Natural killer cell (primary cell): ENCODE measurements at regions of chr6 and their contacts with region 1.

Region 1: GRCh38 chr6:158793432-158793831 is 25.7 kb downstream of the EZR start:
- DNase-seq: peak in 1 of 2 donors; percentile 69
- ATAC-seq: peak in 2 of 3 donors; percentile 46 to 55
- H3K4me3 ChIP-seq: no peak overlapping the region
- H3K4me3 Mint-ChIP-seq: no peak overlapping the region
- H3K27ac ChIP-seq: no peak overlapping the region
- H3K27ac Mint-ChIP-seq: peak overlapping the region in 1 of 2 donors; percentile 29
- H3K4me1 ChIP-seq: peaks cover 52% of the 10 kb centered on the region
- H3K4me1 Mint-ChIP-seq: peaks cover 60 to 72% of the 10 kb centered on the region in 2 donors
- H3K27me3 ChIP-seq: no peaks in the 10 kb centered on the region
- H3K27me3 Mint-ChIP-seq: no peaks in the 10 kb centered on the region
- CTCF ChIP-seq: peak; percentile 50

Region 2: DNA sequence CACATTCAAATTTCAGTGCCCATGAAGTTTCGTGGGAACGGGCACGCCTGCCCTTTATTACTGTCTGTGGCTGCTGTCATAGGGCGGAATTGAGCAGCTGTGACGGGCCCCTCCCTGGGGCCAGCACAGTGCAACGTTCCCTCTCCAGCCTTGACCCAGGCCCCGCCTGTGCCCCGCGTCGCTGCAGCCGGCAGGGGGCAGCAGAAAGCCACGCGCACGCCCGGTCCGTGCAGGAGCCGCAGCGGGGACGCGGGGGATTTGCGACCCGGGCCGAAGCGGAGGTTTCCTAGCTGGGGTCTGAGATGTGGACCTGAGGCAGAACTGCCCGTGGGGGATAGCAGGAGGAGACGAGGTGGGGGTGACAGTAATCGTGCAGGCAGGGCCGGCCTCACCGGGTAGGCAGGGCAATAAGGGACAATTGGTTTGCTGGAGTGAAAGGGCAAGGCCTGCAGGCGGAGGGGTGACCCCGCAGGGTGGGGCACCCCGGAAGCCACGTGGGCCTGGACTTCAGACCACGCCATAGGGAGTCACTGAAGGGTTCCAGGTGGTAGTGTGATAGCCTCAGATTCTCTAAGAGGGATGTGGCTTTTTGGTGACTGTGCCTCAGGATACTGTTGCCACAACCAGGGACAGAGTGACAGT is 89.1 kb before region 1 on chr6:
- intact Hi-C with region 1: loop called (anchors 5 kb)
- DNase-seq: peak; percentile 83 to 88
- ATAC-seq: peak; percentile 92 to 97 (median 96)
- H3K4me3 ChIP-seq: peak overlapping the region; percentile 24
- H3K4me3 Mint-ChIP-seq: peak overlapping the region; percentile 90
- H3K27ac ChIP-seq: peak overlapping the region; percentile 24
- H3K27ac Mint-ChIP-seq: peak overlapping the region; percentile 29 to 94
- H3K4me1 ChIP-seq: peaks cover 39% of the 10 kb centered on the region
- H3K4me1 Mint-ChIP-seq: peaks cover 15 to 36% of the 10 kb centered on the region in 2 donors
- H3K27me3 ChIP-seq: no peaks in the 10 kb centered on the region
- H3K27me3 Mint-ChIP-seq: no peaks in the 10 kb centered on the region
- CTCF ChIP-seq: peak; percentile 98

Region 3: GRCh38 chr6:158769771-158770432 is 23.5 kb before region 1 on chr6:
- intact Hi-C with region 1: no loop called
- DNase-seq: no peak
- ATAC-seq: no peak
- H3K4me3 ChIP-seq: no peak overlapping the region
- H3K4me3 Mint-ChIP-seq: no peak overlapping the region
- H3K27ac ChIP-seq: no peak overlapping the region
- H3K27ac Mint-ChIP-seq: peak overlapping the region; percentile 84 to 87
- H3K4me1 ChIP-seq: peaks cover 29% of the 10 kb centered on the region
- H3K4me1 Mint-ChIP-seq: peaks cover 32 to 45% of the 10 kb centered on the region in 2 donors
- H3K27me3 ChIP-seq: no peaks in the 10 kb centered on the region
- H3K27me3 Mint-ChIP-seq: no peaks in the 10 kb centered on the region
- CTCF ChIP-seq: no peak

Region 4: DNA sequence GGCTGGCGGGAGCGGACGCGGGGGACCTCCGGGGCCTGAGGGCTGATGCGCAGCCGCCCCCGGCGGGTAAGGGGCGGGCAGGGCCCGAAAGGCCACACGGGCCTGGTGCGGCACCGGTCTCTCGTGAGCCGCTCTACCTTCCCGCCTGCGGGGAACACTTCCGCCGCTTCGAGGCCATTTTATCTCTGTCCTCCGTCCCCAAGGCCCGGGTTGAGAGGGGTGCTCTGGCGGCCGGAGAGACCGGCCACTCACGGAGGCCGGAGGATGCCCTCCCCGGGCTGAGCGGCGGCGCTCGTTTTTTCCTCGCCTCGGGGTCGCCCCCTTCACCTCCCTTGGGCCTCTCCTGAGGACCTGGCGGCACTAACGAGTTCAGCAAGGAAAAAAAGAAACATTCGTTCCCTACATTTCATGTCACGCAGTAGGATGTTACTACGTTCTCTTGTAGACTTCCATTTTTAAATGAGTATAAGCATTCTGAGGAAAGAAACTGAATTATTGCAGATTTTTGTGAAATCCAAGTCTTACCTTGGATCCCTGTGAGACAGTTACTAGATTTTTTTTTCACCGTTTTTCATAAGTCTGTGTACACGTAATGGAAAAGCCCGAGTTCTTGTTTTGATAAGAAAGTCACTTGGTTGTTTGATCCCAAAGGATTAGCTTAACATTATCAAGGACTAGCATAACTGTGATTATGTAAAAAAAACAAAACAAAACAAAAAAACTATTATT is 934.4 kb after region 1 on chr6:
- intact Hi-C with region 1: no loop called
- DNase-seq: peak in 1 of 2 donors; percentile 67
- ATAC-seq: peak; percentile 29 to 41 (median 32)
- H3K4me3 ChIP-seq: peak overlapping the region; percentile 92
- H3K4me3 Mint-ChIP-seq: peak overlapping the region; percentile 89
- H3K27ac ChIP-seq: peak overlapping the region; percentile 95
- H3K27ac Mint-ChIP-seq: peak overlapping the region; percentile 97 to 98
- H3K4me1 ChIP-seq: peaks cover 19% of the 10 kb centered on the region
- H3K4me1 Mint-ChIP-seq: peaks cover 37 to 57% of the 10 kb centered on the region in 2 donors
- H3K27me3 ChIP-seq: no peaks in the 10 kb centered on the region
- H3K27me3 Mint-ChIP-seq: no peaks in the 10 kb centered on the region
- CTCF ChIP-seq: no peak